ENCODE measurements at regions of chr7 and their contacts with region 1.

Region 1: DNA sequence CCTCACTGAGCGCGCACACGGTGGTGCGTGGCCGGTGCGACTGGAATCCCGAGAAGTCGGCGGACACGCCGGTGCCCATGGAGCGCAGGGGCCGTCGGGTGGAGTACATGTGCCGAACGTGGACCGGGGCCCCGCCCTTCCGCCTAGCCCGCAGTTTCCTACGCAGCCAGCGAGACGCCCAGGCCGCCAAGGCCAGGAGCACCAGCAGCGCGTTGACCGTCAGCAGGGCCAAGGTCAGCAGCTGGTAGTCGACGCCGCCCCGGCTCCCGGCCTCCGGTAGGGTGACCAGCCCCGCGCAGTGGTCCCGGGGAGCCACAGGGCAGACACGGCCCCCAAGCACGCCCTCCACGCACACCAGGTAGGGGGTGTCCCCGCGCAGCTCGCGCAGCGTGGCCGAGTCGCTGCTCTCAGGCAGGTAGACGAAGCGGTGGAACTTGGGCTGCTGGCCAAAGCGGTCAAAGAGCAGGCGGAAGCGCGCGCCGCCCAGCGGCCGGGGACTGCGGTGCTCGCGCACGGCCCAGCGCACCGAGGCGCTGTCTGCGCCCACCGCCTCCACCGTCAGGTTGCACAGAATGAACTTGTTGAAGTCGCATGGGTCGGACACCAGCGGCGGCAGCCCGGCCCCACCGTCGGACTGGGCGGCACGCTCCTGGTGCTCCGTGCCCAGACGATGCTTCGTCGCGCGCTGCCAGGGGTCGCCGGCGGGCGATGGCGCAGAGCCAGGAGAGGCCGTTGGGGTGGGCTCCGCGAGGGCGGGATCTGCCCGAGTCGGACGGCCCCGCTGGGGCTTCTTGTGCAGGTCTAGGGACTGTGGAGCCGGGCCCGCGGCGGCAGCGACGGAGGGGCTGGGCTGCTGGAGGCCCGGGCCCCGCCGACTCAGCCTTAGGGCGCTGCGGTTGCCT is 2.2 kb downstream of the TRIL start:
- DNase-seq: peak; percentile 90

Region 2: GRCh38 chr7:28926871-28927597 is 28.9 kb before region 1 on chr7:
- intact Hi-C with region 1: loop called (anchors 2 kb)
- DNase-seq: peak; percentile 82

Region 3: DNA sequence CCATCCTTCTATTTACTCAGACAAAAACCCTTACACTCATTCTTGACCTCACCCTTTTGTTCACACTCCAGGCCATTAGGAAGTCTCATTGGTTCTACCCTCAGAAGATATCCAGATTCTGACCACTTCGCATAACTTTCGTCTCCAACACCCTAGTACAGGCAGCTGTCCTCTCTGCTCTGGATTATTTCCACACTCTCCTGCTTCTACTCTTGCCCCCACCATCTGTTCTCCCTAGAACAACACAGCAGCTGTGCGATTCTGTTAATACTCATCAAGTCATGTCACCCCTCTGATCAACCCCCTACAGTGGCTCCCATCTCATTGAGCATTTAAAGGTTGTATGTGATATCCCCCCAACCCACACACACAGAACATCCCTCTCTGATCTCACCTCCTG is 17.6 kb after region 1 on chr7:
- intact Hi-C with region 1: no loop called
- DNase-seq: no peak

Region 4: GRCh38 chr7:28984631-28985030 is 28.7 kb after region 1 on chr7:
- intact Hi-C with region 1: loop called (anchors 2 kb)
- DNase-seq: no peak

Region 5: GRCh38 chr7:29035044-29035740 is 79.2 kb after region 1 on chr7:
- intact Hi-C with region 1: loop called (anchors 5 kb)
- DNase-seq: no peak

Region 6: DNA sequence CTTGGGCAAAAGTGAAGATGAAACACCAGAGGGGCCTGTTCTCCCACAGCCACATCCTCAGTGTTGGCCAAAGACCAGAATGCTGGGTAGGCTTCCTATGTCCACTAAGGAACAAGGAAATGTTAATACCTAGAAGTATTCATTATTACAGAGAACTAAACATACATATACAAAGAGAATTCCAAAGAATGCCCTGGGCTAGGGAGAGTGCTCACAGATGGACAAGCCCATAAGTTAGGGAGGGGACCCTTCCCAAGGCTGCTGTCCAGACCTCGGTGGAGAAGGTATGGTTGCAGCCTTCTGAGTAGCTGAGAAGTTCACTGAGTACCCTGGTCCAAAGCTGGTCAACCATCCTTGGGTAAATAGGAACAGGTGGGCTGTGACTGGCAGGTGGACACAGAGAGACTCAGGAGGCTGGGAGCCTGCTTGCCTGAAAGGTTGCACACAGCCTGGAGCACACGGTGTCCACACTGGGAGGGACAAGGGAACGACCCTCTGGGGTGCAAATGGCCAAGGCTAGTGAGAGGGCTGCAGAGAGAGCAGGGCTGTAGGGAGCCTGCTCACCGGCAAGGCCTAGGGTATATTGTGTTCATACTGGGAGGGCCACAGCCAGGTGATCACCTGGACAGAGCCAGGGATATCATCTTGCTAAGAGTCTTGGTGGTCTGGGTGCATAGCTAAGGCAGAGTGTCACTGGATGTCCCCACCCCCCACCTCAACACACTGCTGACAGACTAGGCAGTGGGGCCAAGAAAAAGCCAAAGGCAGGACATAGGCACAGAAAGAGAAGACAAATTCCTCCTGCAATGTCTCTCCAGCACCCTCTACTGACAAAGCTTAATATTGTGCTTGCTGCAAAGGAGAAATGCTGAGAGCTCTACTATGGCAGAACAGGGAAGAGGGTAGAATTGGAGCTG is 150.0 kb after region 1 on chr7:
- intact Hi-C with region 1: loop called (anchors 2 kb)
- DNase-seq: no peak